ENCODE measurements at regions of chr22 and their contacts with region 1.

Region 1: GRCh38 chr22:37260901-37261336 is 16.9 kb upstream of the RAC2 start:
- DNase-seq: peak; percentile 68
- H3K4me3 Mint-ChIP-seq: no peak overlapping the region
- H3K27ac Mint-ChIP-seq: no peak overlapping the region
- H3K4me1 Mint-ChIP-seq: peaks cover 11% of the 10 kb centered on the region
- H3K27me3 Mint-ChIP-seq: no peaks in the 10 kb centered on the region
- CTCF ChIP-seq: peak; percentile 79

Region 2: GRCh38 chr22:37012262-37012904 is 248.5 kb before region 1 on chr22:
- CTCF ChIA-PET with region 1: no interaction called
- POLR2A ChIA-PET with region 1: no interaction called
- intact Hi-C with region 1: no loop called
- DNase-seq: peak; percentile 26
- H3K4me3 Mint-ChIP-seq: no peak overlapping the region
- H3K27ac Mint-ChIP-seq: no peak overlapping the region
- H3K4me1 Mint-ChIP-seq: peaks cover 7% of the 10 kb centered on the region
- H3K27me3 Mint-ChIP-seq: peaks cover 12% of the 10 kb centered on the region
- CTCF ChIP-seq: no peak

Region 3: GRCh38 chr22:37229805-37230672 is 30.9 kb before region 1 on chr22:
- CTCF ChIA-PET with region 1: interaction called, 16 read pairs
- POLR2A ChIA-PET with region 1: no interaction called
- intact Hi-C with region 1: no loop called
- DNase-seq: peak; percentile 53
- H3K4me3 Mint-ChIP-seq: no peak overlapping the region
- H3K27ac Mint-ChIP-seq: peak overlapping the region; percentile 32
- H3K4me1 Mint-ChIP-seq: peaks cover 27% of the 10 kb centered on the region
- H3K27me3 Mint-ChIP-seq: no peaks in the 10 kb centered on the region
- CTCF ChIP-seq: no peak

Region 4: GRCh38 chr22:37244114-37244921 is 16.6 kb before region 1 on chr22 and contains the start of gene RAC2:
- CTCF ChIA-PET with region 1: interaction called, 62 read pairs
- POLR2A ChIA-PET with region 1: interaction called, 3 read pairs
- intact Hi-C with region 1: no loop called
- DNase-seq: peak; percentile 74
- H3K4me3 Mint-ChIP-seq: peak within 1 kb of the TSS; percentile 80
- H3K27ac Mint-ChIP-seq: peak within 1 kb of the TSS; percentile 35
- H3K4me1 Mint-ChIP-seq: peaks cover 13% of the 10 kb centered on the region
- H3K27me3 Mint-ChIP-seq: no peaks in the 10 kb centered on the region
- CTCF ChIP-seq: no peak
- total RNA-seq, gene RAC2: 42.4 and 52.6 TPM in 2 replicates

Region 5: DNA sequence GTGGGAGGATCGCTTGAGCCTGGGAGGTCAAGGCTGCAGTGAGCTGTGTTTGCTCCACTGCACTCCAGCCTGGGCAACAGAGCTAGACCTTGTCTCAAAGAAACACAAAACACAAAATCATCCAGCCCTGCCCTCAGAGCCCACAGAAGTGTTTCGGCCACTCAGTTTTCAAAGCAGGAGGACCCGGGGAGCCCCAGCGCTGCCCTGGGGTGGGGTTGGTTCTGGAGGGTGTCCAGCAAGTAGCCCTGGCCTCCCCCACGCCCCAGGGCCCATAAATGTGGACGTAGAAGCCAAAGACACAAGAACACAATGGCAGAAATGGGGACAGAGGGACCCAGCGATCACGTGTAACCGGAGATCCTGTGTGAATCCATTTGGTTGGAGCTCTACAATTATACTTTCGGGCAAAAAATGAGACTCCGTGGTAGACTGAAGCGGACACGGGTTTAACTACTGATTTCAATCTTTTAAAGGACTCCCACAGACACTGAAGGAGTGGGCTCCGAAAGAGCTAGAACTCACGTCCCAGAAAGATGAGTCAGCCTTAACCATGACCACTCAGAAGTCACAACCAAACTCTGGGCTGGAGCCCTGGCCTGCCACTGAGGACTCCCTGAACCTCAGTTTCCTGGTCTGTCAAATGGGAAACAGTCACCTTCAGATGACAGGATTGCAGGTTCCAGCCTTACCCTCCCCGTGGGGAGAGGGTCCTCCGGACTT is 12.4 kb after region 1 on chr22:
- CTCF ChIA-PET with region 1: interaction called, 36 read pairs
- POLR2A ChIA-PET with region 1: no interaction called
- intact Hi-C with region 1: no loop called
- DNase-seq: peak; percentile 35
- H3K4me3 Mint-ChIP-seq: no peak overlapping the region
- H3K27ac Mint-ChIP-seq: no peak overlapping the region
- H3K4me1 Mint-ChIP-seq: no peaks in the 10 kb centered on the region
- H3K27me3 Mint-ChIP-seq: no peaks in the 10 kb centered on the region
- CTCF ChIP-seq: no peak